ENCODE measurements at regions of chr17 and their contacts with region 1.

Region 1: GRCh38 chr17:79741751-79742588 is 11.2 kb downstream of the ENPP7 start:
- DNase-seq: peak; percentile 88

Region 2: GRCh38 chr17:79645022-79645776 is 96.8 kb before region 1 on chr17:
- in situ Hi-C with region 1: no loop called
- DNase-seq: no peak

Region 3: GRCh38 chr17:79706931-79707850 is 34.8 kb before region 1 on chr17:
- in situ Hi-C with region 1: no loop called
- DNase-seq: no peak

Region 4: DNA sequence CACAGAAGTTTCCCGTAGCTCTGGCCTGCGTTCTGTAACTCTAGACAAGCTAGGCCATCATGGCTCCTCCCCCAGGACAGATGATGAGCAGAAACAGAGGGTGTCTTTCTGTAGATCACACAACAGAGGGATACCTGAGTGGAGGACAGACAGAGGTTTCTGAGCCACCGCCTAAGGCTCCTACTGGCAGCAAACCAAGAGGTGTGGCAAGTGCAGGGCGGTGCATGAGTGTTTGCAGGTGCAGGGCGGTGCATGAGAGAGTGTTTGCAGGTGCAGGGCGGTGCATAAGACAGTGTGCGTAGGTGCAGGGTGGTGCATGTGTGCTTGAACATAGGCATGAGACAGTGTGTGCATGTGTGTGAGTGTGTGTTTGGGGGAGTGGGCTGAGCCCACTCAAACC is 150.5 kb after region 1 on chr17:
- in situ Hi-C with region 1: loop called (anchors 10 kb)
- DNase-seq: no peak

Region 5: GRCh38 chr17:80045703-80046102 is 303.7 kb after region 1 on chr17:
- in situ Hi-C with region 1: no loop called
- DNase-seq: no peak

Measured in SK-MEL-5 (cell line).